SK-N-SH (cell line): ENCODE measurements at regions of chr1 and their contacts with region 1.

Region 1: DNA sequence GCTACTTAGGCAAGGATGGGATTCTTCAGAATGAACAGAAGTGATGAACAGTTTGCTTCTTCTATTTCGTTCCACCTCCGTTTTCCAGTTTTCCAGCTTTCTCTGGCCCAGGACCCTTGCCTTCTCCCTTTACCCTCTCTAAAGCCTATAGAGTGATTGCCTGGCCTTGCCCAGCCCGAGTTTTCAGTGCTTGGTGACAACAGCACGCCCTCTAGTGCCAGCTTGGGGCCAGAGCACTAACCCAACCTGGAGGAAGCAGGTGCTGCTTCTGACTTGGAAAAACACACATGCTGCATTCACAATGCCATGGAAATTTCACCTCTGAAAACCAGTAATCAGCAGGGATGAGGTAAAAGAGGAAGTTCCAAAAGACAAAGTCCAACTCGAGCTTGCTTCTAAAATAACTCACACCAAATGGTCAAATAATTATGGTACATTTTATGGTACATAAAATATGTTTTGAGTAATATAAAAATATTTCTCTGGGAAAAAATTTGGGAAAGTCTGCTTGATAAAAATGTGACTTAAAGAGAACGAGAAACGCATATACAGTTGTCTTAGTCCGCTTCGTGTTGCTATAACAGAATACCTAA is 26.1 kb downstream of the UBE2T start:
- DNase-seq: peak; percentile 86
- H3K4me3 ChIP-seq: peak overlapping the region in 1 of 2 experiments; percentile 20; a peak in 1 of 4 replicates
- H3K27ac ChIP-seq: no peak overlapping the region
- H3K4me1 ChIP-seq: peaks cover 9 to 10% of the 10 kb centered on the region in 2 experiments; a peak in 2 of 4 replicates
- H3K27me3 ChIP-seq: no peaks in the 10 kb centered on the region
- CTCF ChIP-seq: peak; percentile 99
- EP300 ChIP-seq: no peak
- RAD21 ChIP-seq: peak; percentile 99

Region 2: DNA sequence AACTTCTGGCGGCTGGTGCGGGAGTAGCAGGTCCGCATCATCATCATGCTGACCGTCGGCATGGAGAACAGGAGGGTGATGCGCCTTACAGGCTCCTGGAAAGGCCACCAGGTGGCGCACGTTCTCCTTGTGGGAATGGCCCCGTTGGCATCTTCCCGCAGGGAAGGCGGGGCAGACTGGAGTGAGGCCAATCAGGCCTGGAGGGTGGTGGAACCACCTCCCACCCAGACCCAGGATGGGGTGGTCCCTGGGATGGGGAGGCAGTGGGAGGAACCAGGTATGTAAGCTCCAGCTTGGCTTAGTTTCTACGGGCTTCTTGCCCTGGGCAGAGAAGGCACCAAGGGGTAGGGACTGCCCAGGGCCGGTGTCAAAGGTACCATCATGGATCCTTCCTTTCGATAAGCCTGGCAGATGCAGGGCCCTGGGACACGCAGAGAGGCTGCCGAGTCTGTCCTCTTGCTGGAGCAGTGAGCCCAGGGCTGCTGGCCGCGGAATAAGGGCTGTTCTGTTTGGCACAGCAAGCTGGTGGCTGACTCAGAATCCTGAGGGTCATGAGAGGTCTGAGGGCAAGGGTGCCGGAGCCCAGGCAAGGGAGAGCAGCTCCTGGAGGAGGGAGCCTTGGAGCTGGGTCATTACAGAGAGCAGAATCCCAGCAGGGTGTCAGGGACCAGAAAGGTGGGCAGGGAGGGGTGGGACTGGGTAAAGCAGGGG is 130.8 kb before region 1 on chr1:
- CTCF ChIA-PET with region 1: interaction called, 187 read pairs
- POLR2A ChIA-PET with region 1: no interaction called
- DNase-seq: peak; percentile 90
- H3K4me3 ChIP-seq: no peak overlapping the region
- H3K27ac ChIP-seq: no peak overlapping the region
- H3K4me1 ChIP-seq: peaks cover 0 to 4% of the 10 kb centered on the region in 2 experiments; a peak in 1 of 4 replicates
- H3K27me3 ChIP-seq: peaks cover 12% of the 10 kb centered on the region; the same call in 1 of the 2 replicates
- CTCF ChIP-seq: peak; percentile 80
- EP300 ChIP-seq: no peak
- RAD21 ChIP-seq: peak; percentile 70

Region 3: DNA sequence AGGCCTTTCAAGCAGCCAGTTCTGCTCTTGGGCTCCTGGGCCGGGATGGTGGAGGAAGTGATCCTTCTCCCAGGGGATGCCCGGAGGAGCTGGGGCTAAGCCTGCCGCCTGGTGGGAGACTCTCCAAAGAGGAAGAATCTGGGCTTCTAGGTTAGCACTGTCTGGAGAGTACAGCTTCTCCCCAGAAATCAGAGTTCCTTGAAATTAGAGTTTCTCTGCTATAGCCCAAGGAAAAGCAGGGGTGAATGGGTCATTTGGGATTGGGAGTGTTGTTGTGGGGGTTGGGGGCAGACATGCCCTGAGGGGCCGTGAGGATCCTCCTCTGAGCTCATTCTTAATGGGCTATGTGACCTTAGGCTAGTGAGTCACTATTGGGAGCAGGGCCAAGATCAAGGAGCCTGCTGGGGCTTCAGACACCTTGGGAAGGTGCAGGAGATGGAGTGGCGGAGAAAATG is 115.5 kb before region 1 on chr1:
- CTCF ChIA-PET with region 1: interaction called, 161 read pairs
- POLR2A ChIA-PET with region 1: no interaction called
- DNase-seq: no peak
- H3K4me3 ChIP-seq: no peak overlapping the region
- H3K27ac ChIP-seq: no peak overlapping the region
- H3K4me1 ChIP-seq: no peaks in the 10 kb centered on the region
- H3K27me3 ChIP-seq: peaks cover 10% of the 10 kb centered on the region
- CTCF ChIP-seq: no peak
- EP300 ChIP-seq: no peak
- RAD21 ChIP-seq: no peak

Region 4: DNA sequence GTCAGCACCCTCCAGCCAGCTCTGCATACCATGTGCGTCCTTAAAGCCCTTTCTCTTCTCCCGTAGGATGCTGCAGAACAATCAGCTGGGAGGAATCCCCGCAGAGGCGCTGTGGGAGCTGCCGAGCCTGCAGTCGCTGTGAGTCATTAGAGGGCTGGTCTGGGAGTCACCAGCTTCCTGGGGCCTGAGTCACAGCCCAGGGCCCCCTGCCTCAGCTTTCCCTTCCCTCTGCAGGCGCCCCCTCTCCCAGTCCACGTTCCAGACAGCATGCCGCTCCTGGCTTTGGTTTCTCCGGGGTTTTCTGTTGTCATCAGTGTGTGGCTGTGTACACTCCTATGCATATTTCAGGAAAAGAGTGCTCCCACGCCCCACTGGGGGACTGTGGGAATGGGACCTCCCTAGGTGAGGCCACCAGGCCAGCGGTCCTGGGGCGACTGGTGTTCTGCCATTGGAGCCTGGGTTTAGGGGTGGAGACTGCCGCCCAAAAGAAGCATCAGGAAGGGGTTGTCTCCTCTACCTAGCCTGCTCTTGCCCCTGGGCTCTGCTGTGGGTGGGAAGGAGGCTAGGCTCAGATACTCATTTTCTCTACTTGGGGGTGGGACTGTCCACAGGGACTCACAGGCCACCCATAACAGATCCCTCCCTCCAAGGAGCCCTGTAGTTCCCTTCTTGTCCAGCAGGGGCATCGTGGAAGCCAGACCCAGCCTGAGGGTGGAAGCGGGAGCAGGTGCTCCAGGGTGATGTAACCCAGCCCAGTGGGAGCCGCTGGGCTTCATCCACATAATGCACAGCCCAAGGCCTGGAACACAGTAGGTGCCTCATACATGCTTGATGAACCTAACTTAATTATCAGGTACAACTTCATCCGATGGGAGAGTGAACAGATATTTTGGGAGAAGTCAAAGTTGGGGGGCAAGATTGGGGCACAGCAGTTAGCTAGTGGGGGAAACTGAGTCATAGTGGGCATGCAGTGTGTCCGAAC is 79.5 kb before region 1 on chr1:
- CTCF ChIA-PET with region 1: interaction called, 10 read pairs
- POLR2A ChIA-PET with region 1: no interaction called
- DNase-seq: peak; percentile 87
- H3K4me3 ChIP-seq: peak overlapping the region; percentile 15 to 40; a peak in 2 of 4 replicates
- H3K27ac ChIP-seq: peak overlapping the region in 1 of 2 experiments; percentile 93; a peak in 2 of 4 replicates
- H3K4me1 ChIP-seq: peaks cover 12% of the 10 kb centered on the region in 2 experiments; a peak in 2 of 4 replicates
- H3K27me3 ChIP-seq: no peaks in the 10 kb centered on the region
- CTCF ChIP-seq: peak; percentile 93
- EP300 ChIP-seq: peak in 1 of 2 experiments; percentile 87; a peak in 1 of 4 replicates
- RAD21 ChIP-seq: peak; percentile 50

Region 5: DNA sequence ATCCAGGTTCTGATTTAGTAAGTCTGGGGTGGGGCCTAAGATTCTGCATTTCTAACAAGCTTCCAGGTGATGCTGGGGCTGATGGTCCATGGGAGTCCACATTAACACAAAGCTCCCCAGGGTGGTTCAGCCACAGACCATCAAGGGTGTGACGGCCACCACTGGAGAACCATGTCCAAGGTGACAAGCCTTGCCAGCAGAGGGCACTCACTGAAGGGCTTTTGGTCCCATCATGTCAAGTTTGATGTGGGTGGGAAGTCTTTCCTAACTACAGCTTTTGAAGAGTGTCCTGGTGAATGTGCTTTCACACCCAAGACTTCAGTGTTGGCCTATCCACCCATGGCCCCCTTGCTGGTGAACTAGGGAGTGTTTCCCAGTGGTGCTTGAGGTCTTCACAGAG is 41.1 kb before region 1 on chr1:
- CTCF ChIA-PET with region 1: interaction called, 23 read pairs
- POLR2A ChIA-PET with region 1: no interaction called
- DNase-seq: no peak
- H3K4me3 ChIP-seq: no peak overlapping the region
- H3K27ac ChIP-seq: no peak overlapping the region
- H3K4me1 ChIP-seq: peaks cover 3 to 9% of the 10 kb centered on the region in 2 experiments; a peak in 2 of 4 replicates
- H3K27me3 ChIP-seq: peaks cover 2% of the 10 kb centered on the region; the same call in 1 of the 2 replicates
- CTCF ChIP-seq: peak; percentile 55
- EP300 ChIP-seq: no peak
- RAD21 ChIP-seq: peak; percentile 59

Region 6: GRCh38 chr1:202329891-202330290 is 14.2 kb after region 1 on chr1:
- CTCF ChIA-PET with region 1: interaction called, 16 read pairs
- POLR2A ChIA-PET with region 1: no interaction called
- DNase-seq: no peak
- H3K4me3 ChIP-seq: no peak overlapping the region
- H3K27ac ChIP-seq: no peak overlapping the region
- H3K4me1 ChIP-seq: no peaks in the 10 kb centered on the region
- H3K27me3 ChIP-seq: no peaks in the 10 kb centered on the region
- CTCF ChIP-seq: no peak
- EP300 ChIP-seq: no peak
- RAD21 ChIP-seq: no peak

Region 7: DNA sequence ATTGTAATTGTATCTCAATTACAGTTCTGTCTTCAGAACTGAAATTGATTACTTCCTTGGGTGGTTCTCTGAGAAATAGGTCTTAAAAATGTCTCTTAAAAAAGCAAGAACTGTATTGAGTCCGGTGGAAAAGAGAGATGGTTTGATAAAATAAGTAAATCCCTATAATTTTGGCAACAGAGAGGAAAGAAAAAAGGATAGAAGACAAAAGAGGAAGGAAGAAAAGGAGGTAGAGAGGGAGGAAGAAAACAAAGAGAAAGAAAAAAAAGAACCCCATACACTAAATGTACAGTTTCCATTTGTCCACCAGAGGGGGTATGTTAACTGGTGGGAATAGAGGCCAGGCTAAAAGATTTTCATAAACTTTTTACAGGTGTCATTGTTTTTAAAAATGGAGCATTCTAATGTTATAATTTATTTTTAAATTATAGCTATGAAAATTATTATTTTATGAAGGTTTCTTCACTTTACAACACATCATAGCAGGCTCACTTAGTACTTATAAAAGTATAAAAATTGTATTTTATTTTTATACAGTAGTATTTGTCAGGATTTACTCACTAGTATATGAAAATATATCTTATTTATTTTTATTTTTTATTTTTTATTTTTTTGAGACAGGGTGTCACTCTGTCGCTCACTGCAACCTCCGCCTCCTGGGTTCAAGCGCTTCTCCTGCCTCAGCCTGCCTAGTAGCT is 28.1 kb after region 1 on chr1:
- CTCF ChIA-PET with region 1: interaction called, 11 read pairs
- POLR2A ChIA-PET with region 1: interaction called, 3 read pairs
- DNase-seq: peak; percentile 37
- H3K4me3 ChIP-seq: peak overlapping the region in 1 of 2 experiments; percentile 23; a peak in 1 of 4 replicates
- H3K27ac ChIP-seq: 0 out of 4 replicates have a peak overlapping the region, but pooled peaks of 1 of the 2 experiments have one; percentile 13
- H3K4me1 ChIP-seq: no peaks in the 10 kb centered on the region; a peak in 2 of 4 replicates
- H3K27me3 ChIP-seq: no peaks in the 10 kb centered on the region
- CTCF ChIP-seq: peak; percentile 82
- EP300 ChIP-seq: no peak
- RAD21 ChIP-seq: peak; percentile 72